ENCODE measurements at regions of chr1 and their contacts with region 1.

Region 1: GRCh38 chr1:244864253-244865027 is at the start of gene HNRNPU:
- DNase-seq: peak; percentile 97
- H3K4me3 Mint-ChIP-seq: peak within 1 kb of the TSS; percentile 87
- H3K27ac Mint-ChIP-seq: peak within 1 kb of the TSS; percentile 95
- H3K4me1 Mint-ChIP-seq: peaks cover 41% of the 10 kb centered on the region
- H3K27me3 Mint-ChIP-seq: no peaks in the 10 kb centered on the region
- total RNA-seq, gene HNRNPU: 566 and 573 TPM in 2 replicates

Region 2: DNA sequence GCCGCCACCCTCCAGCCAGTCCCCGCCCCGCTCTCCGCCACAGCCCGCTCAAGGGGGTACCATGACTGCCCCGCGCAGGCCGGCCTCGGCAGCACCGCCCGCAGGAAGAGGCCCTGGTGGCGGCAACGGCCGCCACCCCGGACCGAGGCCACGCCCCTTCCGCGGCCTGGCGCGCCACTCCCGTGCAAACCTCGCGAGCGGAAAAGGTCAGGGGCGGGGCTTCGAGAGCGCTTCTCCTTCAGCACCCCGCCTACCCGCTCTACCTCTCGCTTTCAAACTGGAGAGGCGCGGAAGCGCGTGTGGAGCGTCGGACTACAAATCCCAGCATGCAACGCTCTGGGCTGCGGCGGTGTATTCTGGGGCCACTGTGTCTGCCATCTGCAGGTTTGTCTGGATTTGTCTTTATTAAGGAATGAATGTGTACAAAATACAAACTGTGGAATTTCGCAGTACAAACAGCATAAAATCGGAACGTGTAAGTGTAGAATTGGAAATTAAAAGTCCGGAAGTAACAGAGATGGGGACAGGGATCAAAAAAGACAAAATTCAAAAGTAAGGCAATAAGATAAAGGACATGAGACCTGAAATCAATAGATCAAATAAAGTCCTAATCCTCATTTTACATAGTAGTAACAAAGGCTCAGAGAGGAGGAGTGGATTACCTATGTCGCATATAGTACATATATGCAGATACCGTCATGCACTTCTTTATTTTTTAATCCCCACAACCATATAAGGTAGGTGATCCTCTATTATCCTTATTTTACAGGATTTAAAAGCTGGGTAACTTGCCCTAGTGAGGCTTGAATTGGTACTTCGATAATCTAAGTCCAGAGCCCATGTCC is 412.3 kb before region 1 on chr1:
- intact Hi-C with region 1: loop called (anchors 1 kb)
- DNase-seq: peak; percentile 98
- H3K4me3 Mint-ChIP-seq: peak overlapping the region; percentile 95
- H3K27ac Mint-ChIP-seq: peak overlapping the region; percentile 96
- H3K4me1 Mint-ChIP-seq: peaks cover 41% of the 10 kb centered on the region
- H3K27me3 Mint-ChIP-seq: no peaks in the 10 kb centered on the region

Region 3: DNA sequence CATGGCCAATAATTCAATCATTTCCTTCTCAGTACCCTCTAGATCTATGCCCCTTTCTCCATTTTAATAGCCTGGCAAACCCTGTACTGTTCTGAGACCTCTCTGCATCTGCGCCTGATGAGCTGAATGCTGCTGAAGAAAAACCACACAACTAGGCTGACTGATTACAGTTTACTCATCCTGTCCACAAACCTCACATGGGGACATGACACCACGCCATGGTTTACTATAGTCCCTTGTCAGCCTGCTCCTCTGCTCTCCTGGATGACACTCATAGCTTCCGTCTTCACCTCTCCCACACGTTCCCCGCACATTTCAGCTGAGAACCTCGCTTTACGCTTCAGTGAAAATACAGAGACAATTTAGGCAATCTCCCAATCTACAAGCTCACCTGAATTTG is 151.8 kb before region 1 on chr1:
- intact Hi-C with region 1: no loop called
- DNase-seq: no peak
- H3K4me3 Mint-ChIP-seq: no peak overlapping the region
- H3K27ac Mint-ChIP-seq: peak overlapping the region; percentile 36
- H3K4me1 Mint-ChIP-seq: peaks cover 8% of the 10 kb centered on the region
- H3K27me3 Mint-ChIP-seq: peaks cover 4% of the 10 kb centered on the region

Region 4: DNA sequence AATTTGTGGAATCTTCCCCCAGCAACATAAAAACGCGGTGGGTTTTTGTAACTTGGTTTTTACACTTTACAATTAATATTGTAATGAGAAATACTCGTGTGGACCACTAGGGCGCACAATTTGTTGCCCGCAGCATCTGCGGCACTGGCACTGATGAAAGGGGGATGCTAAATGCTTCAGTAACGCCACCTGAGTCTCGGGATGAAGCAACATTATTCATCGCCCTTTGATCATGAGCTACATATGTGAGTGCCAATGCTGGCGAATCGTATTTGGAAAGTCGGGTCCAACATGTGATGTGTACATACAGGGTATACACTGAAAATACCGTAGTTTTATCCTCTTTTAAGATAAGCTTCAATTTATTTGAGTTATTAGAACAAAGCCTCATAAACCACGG is 63.2 kb before region 1 on chr1:
- intact Hi-C with region 1: loop called (anchors 2 kb)
- DNase-seq: peak; percentile 6
- H3K4me3 Mint-ChIP-seq: no peak overlapping the region
- H3K27ac Mint-ChIP-seq: no peak overlapping the region
- H3K4me1 Mint-ChIP-seq: peaks cover 8% of the 10 kb centered on the region
- H3K27me3 Mint-ChIP-seq: peaks cover 14% of the 10 kb centered on the region

Region 5: DNA sequence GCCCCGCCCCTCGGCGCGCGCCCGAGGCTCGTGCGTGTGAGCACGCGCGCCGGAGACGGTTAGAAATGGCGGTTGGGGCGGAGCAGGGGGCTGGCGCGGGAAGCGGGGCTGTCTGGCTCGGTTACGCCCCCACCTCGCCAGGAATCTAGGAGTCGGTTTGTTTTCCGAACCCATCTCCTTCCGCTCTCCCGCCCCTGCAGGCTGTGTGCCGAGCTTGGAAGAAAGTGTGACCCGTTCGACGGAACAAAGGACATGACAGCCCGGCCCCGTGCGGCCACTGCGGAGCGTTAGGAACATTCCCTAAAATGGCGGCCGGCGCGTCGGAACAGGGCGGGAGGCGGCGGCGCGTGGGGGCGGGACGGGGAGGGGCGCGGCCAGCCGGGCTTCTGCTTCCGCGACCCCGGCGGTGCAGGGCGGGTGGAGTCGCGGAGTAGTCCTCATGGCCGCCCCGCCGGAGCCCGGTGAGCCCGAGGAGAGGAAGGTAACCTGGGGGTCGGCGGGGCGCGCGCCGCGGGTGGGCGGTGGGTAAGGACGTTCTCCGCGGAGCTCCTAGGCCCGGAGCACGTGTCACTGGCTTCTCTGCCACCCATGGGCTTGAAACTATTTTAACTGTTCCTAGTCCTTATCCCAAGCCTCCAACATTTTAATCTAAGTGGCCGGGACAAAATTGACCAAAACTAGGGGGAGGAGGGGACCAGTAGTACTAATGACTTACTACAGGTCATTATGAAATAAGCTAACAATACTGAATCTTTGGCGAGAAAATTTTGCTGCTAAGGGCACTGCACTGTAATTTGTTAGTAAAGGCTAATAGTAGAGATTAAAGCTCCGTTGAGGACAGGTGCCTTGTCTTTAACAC is 28.9 kb before region 1 on chr1 and contains the start of gene COX20:
- intact Hi-C with region 1: loop called (anchors 1 kb)
- DNase-seq: peak; percentile 85
- H3K4me3 Mint-ChIP-seq: peak within 1 kb of the TSS; percentile 96
- H3K27ac Mint-ChIP-seq: peak within 1 kb of the TSS; percentile 99
- H3K4me1 Mint-ChIP-seq: peaks cover 56% of the 10 kb centered on the region
- H3K27me3 Mint-ChIP-seq: no peaks in the 10 kb centered on the region
- total RNA-seq, gene COX20: 27.4 and 27.6 TPM in 2 replicates

Region 6: GRCh38 chr1:244918421-244919319 is 54.2 kb after region 1 on chr1:
- intact Hi-C with region 1: loop called (anchors 1 kb)
- DNase-seq: peak; percentile 39
- H3K4me3 Mint-ChIP-seq: peak overlapping the region; percentile 82
- H3K27ac Mint-ChIP-seq: peak overlapping the region; percentile 55
- H3K4me1 Mint-ChIP-seq: peaks cover 14% of the 10 kb centered on the region
- H3K27me3 Mint-ChIP-seq: peaks cover 30% of the 10 kb centered on the region

Region 7: GRCh38 chr1:245045087-245045881 is 180.8 kb after region 1 on chr1:
- intact Hi-C with region 1: loop called (anchors 1 kb)
- DNase-seq: no peak
- H3K4me3 Mint-ChIP-seq: no peak overlapping the region
- H3K27ac Mint-ChIP-seq: no peak overlapping the region
- H3K4me1 Mint-ChIP-seq: peaks cover 6% of the 10 kb centered on the region
- H3K27me3 Mint-ChIP-seq: no peaks in the 10 kb centered on the region

Region 8: DNA sequence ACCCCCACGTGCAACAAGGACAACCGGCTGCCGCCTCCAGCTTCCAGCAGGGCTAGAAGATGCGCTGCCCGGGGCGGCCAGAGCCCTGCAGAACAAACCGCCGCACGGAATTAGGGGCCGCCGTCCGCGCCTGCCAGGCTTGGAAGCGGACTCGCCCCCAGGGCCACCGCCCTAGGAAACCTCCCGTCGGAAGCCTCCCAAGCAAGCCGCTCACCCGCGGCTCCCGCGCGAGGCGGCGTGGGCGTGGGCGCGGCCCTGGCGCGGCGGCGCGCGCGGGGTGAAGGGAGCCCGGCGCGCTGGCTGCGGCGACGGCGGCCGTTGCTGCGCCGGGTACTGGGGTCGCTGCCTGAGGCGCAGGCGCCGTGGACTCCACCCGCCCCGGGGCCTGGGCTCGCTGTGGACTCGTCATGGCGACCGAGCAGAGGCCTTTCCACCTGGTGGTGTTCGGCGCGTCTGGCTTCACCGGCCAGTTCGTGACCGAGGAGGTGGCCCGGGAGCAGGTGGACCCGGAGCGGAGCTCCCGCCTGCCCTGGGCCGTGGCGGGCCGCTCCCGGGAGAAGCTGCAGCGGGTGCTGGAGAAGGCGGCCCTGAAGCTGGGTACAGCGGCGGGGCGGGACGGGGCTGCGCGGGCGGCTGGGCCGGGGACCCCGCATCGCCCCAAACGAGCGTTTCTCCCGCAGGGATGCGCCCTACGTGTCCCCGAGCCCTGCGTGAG is 1859.7 kb after region 1 on chr1 and contains the start of gene SCCPDH:
- intact Hi-C with region 1: loop called (anchors 5 kb)
- DNase-seq: peak; percentile 55
- H3K4me3 Mint-ChIP-seq: peak within 1 kb of the TSS; percentile 92
- H3K27ac Mint-ChIP-seq: peak within 1 kb of the TSS; percentile 78
- H3K4me1 Mint-ChIP-seq: peaks cover 10% of the 10 kb centered on the region
- H3K27me3 Mint-ChIP-seq: peaks cover 6% of the 10 kb centered on the region
- total RNA-seq, gene SCCPDH: 23.5 and 24.3 TPM in 2 replicates